B cell (primary cell): ENCODE measurements at regions of chr16 and their contacts with region 1.

Region 1: GRCh38 chr16:71610936-71611871 is 14.8 kb upstream of the MARVELD3 start:
- DNase-seq: peak; percentile 88
- ATAC-seq: peak; percentile 91
- H3K4me3 ChIP-seq: peak overlapping the region in 2 of 5 experiments; percentile 11 to 15
- H3K4me3 Mint-ChIP-seq: peak overlapping the region; percentile 70
- H3K27ac ChIP-seq: no peak overlapping the region
- H3K27ac Mint-ChIP-seq: no peak overlapping the region
- H3K4me1 ChIP-seq: peaks cover 3 to 13% of the 10 kb centered on the region in 2 donors
- H3K4me1 Mint-ChIP-seq: peaks cover 21% of the 10 kb centered on the region
- H3K27me3 ChIP-seq: peaks cover 0 to 2% (median 0%) of the 10 kb centered on the region in 4 experiments
- H3K27me3 Mint-ChIP-seq: no peaks in the 10 kb centered on the region
- CTCF ChIP-seq: peak; percentile 99

Region 2: DNA sequence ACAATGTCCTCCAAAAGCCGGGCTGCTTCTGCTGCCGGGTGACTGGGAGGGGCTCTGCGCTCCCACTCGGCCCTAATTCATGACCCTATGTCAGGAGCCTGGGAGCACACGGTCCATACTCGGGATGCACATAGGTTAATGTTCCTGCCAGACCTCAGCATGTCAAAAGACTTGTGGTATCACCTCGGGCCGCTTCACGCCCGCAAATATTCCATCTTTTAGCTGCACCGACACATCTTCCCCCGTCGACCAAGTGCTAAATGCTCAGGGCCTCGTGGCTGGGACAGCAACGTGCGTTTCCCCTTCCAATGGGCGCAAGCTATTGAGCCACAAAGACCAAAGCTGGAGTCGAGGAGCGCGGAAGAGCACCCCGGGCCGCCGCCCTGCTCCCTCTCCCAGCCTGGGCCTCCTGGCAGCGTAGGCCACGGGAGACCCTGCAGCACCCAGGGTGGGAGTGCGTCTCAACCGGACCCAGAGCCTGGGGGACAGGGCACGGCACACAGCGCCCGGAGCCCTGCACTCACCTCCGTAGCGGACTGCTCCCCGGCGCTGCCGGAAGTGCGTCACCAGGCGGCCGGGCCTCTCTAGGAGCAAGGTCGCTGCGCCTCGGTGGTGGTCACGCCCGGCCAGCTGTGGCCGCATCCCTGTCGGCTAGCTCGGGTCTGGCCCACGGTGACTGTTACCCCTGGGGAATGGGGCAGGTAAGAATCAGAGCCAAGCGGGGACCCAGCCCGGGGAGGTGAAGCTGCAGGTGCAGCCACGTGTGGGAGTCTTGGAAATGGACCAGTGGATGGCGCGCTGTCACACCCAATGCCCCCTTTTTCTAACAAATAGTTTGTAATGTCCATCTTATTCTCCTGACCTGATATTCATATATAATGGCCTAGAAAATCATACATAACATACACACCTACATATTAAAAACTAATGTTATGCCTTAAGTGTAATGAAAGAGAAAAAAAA is 149.2 kb before region 1 on chr16 and contains the start of gene ZNF23:
- CTCF ChIA-PET with region 1: interaction called, 15 read pairs
- POLR2A ChIA-PET with region 1: no interaction called
- intact Hi-C with region 1: loop called (anchors 1 kb)
- DNase-seq: peak; percentile 91
- ATAC-seq: peak; percentile 97
- H3K4me3 ChIP-seq: peak within 1 kb of the TSS; percentile 62 to 99 (median 96)
- H3K4me3 Mint-ChIP-seq: peak within 1 kb of the TSS; percentile 96
- H3K27ac ChIP-seq: peak within 1 kb of the TSS; percentile 91 to 95
- H3K27ac Mint-ChIP-seq: peak within 1 kb of the TSS; percentile 95
- H3K4me1 ChIP-seq: peaks cover 14 to 16% of the 10 kb centered on the region in 2 donors
- H3K4me1 Mint-ChIP-seq: peaks cover 32% of the 10 kb centered on the region
- H3K27me3 ChIP-seq: no peaks in the 10 kb centered on the region
- H3K27me3 Mint-ChIP-seq: no peaks in the 10 kb centered on the region
- CTCF ChIP-seq: peak; percentile 36
- total RNA-seq, gene ZNF23: 15.0 and 18.3 TPM in 2 replicates

Region 3: DNA sequence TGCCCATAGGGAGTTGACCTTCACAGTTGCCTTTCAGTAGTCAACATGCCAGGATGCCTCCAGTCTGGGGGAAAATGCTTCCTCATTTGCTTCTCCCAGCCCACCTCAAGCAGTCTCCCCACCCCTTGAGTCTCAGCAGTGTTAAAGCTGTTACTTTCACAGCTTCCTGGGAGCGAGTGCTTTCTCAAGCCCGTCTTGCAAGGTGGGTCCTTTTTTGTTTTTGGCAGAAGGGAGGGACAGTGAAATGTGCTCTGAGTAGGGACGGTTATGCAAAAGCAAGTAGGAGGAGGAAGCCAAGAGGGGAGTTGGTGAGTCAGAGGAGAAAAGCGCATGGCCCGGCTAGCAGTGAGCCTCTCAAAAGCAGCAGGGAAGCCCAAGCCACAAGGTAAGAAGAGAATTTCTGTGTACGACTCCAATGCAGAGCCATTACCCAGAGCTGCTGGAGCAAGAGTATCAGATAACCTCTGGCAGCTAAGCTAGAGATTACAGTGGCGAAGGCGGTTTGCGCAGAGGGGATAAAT is 85.0 kb before region 1 on chr16 and contains the start of gene CHST4:
- CTCF ChIA-PET with region 1: interaction called, 11 read pairs
- POLR2A ChIA-PET with region 1: no interaction called
- intact Hi-C with region 1: no loop called
- DNase-seq: no peak
- ATAC-seq: no peak
- H3K4me3 ChIP-seq: no peak within 1 kb of the TSS
- H3K4me3 Mint-ChIP-seq: peak within 1 kb of the TSS; percentile 45
- H3K27ac ChIP-seq: no peak within 1 kb of the TSS
- H3K27ac Mint-ChIP-seq: no peak within 1 kb of the TSS
- H3K4me1 ChIP-seq: no peaks in the 10 kb centered on the region
- H3K4me1 Mint-ChIP-seq: peaks cover 6% of the 10 kb centered on the region
- H3K27me3 ChIP-seq: peaks cover 0 to 37% (median 6%) of the 10 kb centered on the region in 4 experiments
- H3K27me3 Mint-ChIP-seq: peaks cover 60% of the 10 kb centered on the region
- CTCF ChIP-seq: no peak
- total RNA-seq, gene CHST4: not detected in 2 replicates

Region 4: GRCh38 chr16:71564155-71564967 is 46.8 kb before region 1 on chr16:
- CTCF ChIA-PET with region 1: interaction called, 243 read pairs
- POLR2A ChIA-PET with region 1: interaction called, 42 read pairs
- intact Hi-C with region 1: loop called (anchors 1 kb)
- DNase-seq: no peak
- ATAC-seq: peak; percentile 81
- H3K4me3 ChIP-seq: peak overlapping the region in 4 of 5 experiments; percentile 48 to 73 (median 59)
- H3K4me3 Mint-ChIP-seq: peak overlapping the region; percentile 83
- H3K27ac ChIP-seq: peak overlapping the region; percentile 99
- H3K27ac Mint-ChIP-seq: peak overlapping the region; percentile 94
- H3K4me1 ChIP-seq: peaks cover 33 to 34% of the 10 kb centered on the region in 2 donors
- H3K4me1 Mint-ChIP-seq: peaks cover 34% of the 10 kb centered on the region
- H3K27me3 ChIP-seq: no peaks in the 10 kb centered on the region
- H3K27me3 Mint-ChIP-seq: no peaks in the 10 kb centered on the region
- CTCF ChIP-seq: no peak

Region 5: DNA sequence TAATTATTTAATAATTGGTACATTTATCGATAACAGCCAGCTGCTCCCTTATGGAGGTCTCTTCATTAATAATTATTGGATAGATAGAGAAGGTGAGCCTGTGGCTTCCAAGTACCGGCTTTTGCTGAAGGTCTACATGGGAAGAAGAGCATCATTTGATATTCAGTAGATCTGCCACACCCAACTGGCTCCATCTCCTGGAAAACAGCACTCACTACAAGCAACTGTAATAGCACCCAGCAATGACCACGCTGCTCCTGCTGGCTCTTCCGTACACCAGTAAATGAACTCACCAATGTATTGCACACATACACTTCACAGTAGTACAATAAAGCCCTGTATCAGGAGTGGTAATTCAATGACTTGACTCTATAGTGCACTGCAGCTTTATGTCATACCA is 34.2 kb after region 1 on chr16:
- CTCF ChIA-PET with region 1: interaction called, 10 read pairs
- POLR2A ChIA-PET with region 1: no interaction called
- intact Hi-C with region 1: no loop called
- DNase-seq: peak; percentile 28
- ATAC-seq: no peak
- H3K4me3 ChIP-seq: no peak overlapping the region
- H3K4me3 Mint-ChIP-seq: no peak overlapping the region
- H3K27ac ChIP-seq: no peak overlapping the region
- H3K27ac Mint-ChIP-seq: no peak overlapping the region
- H3K4me1 ChIP-seq: no peaks in the 10 kb centered on the region
- H3K4me1 Mint-ChIP-seq: no peaks in the 10 kb centered on the region
- H3K27me3 ChIP-seq: no peaks in the 10 kb centered on the region
- H3K27me3 Mint-ChIP-seq: no peaks in the 10 kb centered on the region
- CTCF ChIP-seq: peak; percentile 38